ENCODE measurements at regions of chr11 and their contacts with region 1.

Region 1: GRCh38 chr11:81644239-81644840 is 1089.3 kb downstream of the FAM181B start:
- DNase-seq: peak; percentile 28
- ATAC-seq: peak; percentile 63
- H3K4me3 Mint-ChIP-seq: no peak overlapping the region
- H3K27ac Mint-ChIP-seq: no peak overlapping the region
- H3K4me1 Mint-ChIP-seq: no peaks in the 10 kb centered on the region
- H3K27me3 Mint-ChIP-seq: peaks cover 17% of the 10 kb centered on the region

Region 2: GRCh38 chr11:81253244-81253643 is 391.1 kb before region 1 on chr11:
- CTCF ChIA-PET with region 1: no interaction called
- POLR2A ChIA-PET with region 1: no interaction called
- intact Hi-C with region 1: no loop called
- DNase-seq: no peak
- ATAC-seq: no peak
- H3K4me3 Mint-ChIP-seq: no peak overlapping the region
- H3K27ac Mint-ChIP-seq: no peak overlapping the region
- H3K4me1 Mint-ChIP-seq: no peaks in the 10 kb centered on the region
- H3K27me3 Mint-ChIP-seq: no peaks in the 10 kb centered on the region

Region 3: GRCh38 chr11:81674211-81674610 is 29.9 kb after region 1 on chr11:
- CTCF ChIA-PET with region 1: no interaction called
- POLR2A ChIA-PET with region 1: no interaction called
- intact Hi-C with region 1: no loop called
- DNase-seq: peak; percentile 18
- ATAC-seq: peak; percentile 79
- H3K4me3 Mint-ChIP-seq: no peak overlapping the region
- H3K27ac Mint-ChIP-seq: no peak overlapping the region
- H3K4me1 Mint-ChIP-seq: no peaks in the 10 kb centered on the region
- H3K27me3 Mint-ChIP-seq: no peaks in the 10 kb centered on the region

Region 4: GRCh38 chr11:82038153-82038552 is 393.8 kb after region 1 on chr11:
- CTCF ChIA-PET with region 1: no interaction called
- POLR2A ChIA-PET with region 1: no interaction called
- intact Hi-C with region 1: loop called in 1 of 2 experiments (anchors 1 kb)
- DNase-seq: no peak
- ATAC-seq: no peak
- H3K4me3 Mint-ChIP-seq: no peak overlapping the region
- H3K27ac Mint-ChIP-seq: no peak overlapping the region
- H3K4me1 Mint-ChIP-seq: no peaks in the 10 kb centered on the region
- H3K27me3 Mint-ChIP-seq: no peaks in the 10 kb centered on the region

Region 5: GRCh38 chr11:82229341-82229740 is 585.0 kb after region 1 on chr11:
- CTCF ChIA-PET with region 1: interaction called, 5 read pairs
- POLR2A ChIA-PET with region 1: no interaction called
- intact Hi-C with region 1: loop called (anchors 1 kb)
- DNase-seq: no peak
- ATAC-seq: no peak
- H3K4me3 Mint-ChIP-seq: no peak overlapping the region
- H3K27ac Mint-ChIP-seq: no peak overlapping the region
- H3K4me1 Mint-ChIP-seq: no peaks in the 10 kb centered on the region
- H3K27me3 Mint-ChIP-seq: no peaks in the 10 kb centered on the region

Region 6: DNA sequence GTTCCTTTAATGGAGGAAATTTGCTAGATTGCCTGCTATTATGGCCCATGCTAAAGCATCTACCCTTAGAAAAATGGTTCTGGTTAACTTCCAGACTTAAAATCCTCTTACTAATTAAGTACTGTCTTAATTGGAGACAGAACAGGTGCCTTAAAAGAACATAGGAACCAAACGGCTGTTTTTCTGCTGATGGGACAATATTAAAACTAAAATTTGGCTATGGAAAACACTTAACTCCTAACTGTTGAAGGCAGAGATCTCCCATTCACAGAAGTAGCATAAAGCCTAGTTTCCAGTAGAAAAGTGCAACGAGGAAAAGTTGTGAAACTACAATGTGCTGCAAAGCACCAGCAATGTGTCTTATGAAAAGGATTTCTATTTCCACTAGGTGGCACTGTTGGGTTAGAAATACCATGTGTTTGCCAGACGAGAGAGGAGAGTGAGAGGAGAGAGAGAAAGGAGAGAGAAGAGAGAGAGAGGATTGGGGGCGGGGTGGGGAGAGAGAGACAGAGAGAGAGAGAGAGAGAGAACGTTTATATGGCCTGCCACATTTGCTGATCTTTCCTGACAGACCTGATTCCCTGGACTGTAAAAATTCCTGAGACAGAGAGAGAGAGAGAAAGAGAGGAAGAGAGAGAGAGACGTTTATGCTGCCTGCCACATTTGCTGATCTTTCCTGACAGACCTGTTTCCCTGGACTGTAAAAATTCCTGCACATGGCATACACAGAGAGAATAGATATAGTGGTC is 1037.8 kb after region 1 on chr11:
- CTCF ChIA-PET with region 1: no interaction called
- POLR2A ChIA-PET with region 1: no interaction called
- intact Hi-C with region 1: loop called in 1 of 2 experiments (anchors 5 kb)
- DNase-seq: no peak
- ATAC-seq: peak; percentile 71
- H3K4me3 Mint-ChIP-seq: no peak overlapping the region
- H3K27ac Mint-ChIP-seq: no peak overlapping the region
- H3K4me1 Mint-ChIP-seq: peaks cover 3% of the 10 kb centered on the region
- H3K27me3 Mint-ChIP-seq: peaks cover 20% of the 10 kb centered on the region

Measured in activated CD4-positive, alpha-beta T cell treated with anti-CD3 and anti-CD28 coated beads for 36 hours (primary cell).